ENCODE measurements at regions of chr11 and their contacts with region 1.

Region 1: DNA sequence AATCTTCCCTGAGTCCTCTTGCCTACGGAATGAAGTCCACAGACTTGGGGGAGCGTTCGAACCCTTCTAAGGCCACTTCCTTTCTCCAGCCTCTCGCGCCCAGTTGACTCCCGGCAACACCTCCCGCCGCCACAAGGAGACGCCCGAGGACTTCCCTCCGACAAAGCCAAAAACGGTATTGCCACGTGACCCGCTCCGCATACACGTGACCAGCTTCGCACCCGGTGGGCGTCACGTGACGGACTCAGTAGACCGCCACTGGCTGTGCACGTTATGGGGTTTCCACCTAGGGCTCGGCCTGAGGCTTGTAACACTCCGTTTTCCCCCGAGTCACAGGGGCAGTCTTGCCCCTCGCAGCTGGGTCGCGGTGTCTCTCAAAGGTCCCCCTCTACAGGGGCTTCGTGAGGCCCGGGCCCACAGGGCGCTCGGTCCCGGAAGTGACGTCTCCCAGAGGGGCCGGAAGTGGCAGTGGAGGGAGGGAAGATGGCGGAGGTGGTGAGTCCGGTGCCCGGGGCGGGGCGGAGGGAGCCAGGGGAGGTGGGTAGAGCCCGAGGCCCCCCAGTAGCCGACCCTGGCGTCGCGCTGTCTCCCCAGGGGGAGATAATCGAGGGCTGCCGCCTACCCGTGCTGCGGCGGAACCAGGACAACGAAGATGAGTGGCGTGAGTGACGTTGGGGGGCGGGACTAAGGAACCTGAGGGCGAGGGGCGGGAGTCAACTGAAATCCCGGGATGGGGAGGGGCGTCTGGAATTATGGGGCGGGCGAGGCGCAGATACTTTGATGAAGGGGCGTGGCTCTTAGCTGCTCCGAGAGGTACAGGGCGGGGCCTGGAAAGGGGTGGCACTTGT is at the start of gene KAT5:
- DNase-seq: peak; percentile 100
- H3K4me3 ChIP-seq: peak within 1 kb of the TSS; percentile 58
- H3K27ac ChIP-seq: peak within 1 kb of the TSS; percentile 99
- H3K4me1 ChIP-seq: peaks cover 10% of the 10 kb centered on the region
- H3K27me3 ChIP-seq: no peaks in the 10 kb centered on the region
- CTCF ChIP-seq: peak; percentile 98
- total RNA-seq, gene KAT5: 68.1 and 71.3 TPM in 2 replicates

Region 2: DNA sequence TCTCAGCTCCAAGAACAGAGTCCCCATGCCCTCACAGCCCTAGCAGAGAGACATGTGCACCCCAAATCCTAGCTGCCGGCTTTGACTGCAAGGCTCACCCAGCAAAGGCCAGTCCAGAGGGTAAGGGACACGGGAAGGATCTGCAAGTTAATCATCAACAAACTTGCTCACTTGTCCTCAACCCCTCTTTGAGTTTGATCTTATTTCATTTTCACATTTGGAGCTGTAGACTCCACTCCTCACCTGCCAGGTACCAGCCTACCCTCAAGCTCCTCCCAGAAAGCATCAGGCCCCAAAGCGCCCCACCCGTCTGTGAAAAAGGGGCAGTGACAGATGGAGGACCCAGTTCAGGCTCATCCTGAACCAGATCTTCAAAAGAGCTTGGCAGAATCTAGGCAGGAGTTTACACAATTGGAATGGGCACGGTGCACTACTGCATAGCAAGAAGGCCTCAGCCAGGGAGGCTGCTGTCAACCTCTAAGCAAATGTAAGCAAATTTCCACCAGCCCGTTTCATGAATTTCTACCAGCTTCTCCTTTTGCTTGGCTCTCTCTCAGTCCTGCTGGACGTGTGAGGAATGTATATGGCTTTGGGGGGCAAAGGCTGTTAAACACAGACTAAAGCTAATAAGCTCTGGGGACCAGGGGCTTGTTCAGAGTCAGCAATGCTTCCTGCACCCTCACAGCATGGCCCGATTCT is 839.1 kb before region 1 on chr11:
- CTCF ChIA-PET with region 1: no interaction called
- POLR2A ChIA-PET with region 1: interaction called, 16 read pairs
- intact Hi-C with region 1: no loop called
- DNase-seq: no peak
- H3K4me3 ChIP-seq: no peak overlapping the region
- H3K27ac ChIP-seq: no peak overlapping the region
- H3K4me1 ChIP-seq: peaks cover 20% of the 10 kb centered on the region
- H3K27me3 ChIP-seq: no peaks in the 10 kb centered on the region
- CTCF ChIP-seq: no peak

Region 3: GRCh38 chr11:65471410-65471762 is 240.6 kb before region 1 on chr11:
- CTCF ChIA-PET with region 1: no interaction called
- POLR2A ChIA-PET with region 1: no interaction called
- intact Hi-C with region 1: no loop called
- DNase-seq: peak; percentile 85
- H3K4me3 ChIP-seq: no peak overlapping the region
- H3K27ac ChIP-seq: peak overlapping the region; percentile 49
- H3K4me1 ChIP-seq: peaks cover 14% of the 10 kb centered on the region
- H3K27me3 ChIP-seq: no peaks in the 10 kb centered on the region
- CTCF ChIP-seq: peak; percentile 75

Region 4: GRCh38 chr11:65817835-65818742 is 106.1 kb after region 1 on chr11:
- CTCF ChIA-PET with region 1: interaction called, 12 read pairs
- POLR2A ChIA-PET with region 1: no interaction called
- intact Hi-C with region 1: loop called (anchors 2 kb)
- DNase-seq: peak; percentile 91
- H3K4me3 ChIP-seq: peak overlapping the region; percentile 59
- H3K27ac ChIP-seq: no peak overlapping the region
- H3K4me1 ChIP-seq: no peaks in the 10 kb centered on the region
- H3K27me3 ChIP-seq: no peaks in the 10 kb centered on the region
- CTCF ChIP-seq: peak; percentile 97

Region 5: GRCh38 chr11:65988791-65989592 is 277.0 kb after region 1 on chr11:
- CTCF ChIA-PET with region 1: no interaction called
- POLR2A ChIA-PET with region 1: no interaction called
- intact Hi-C with region 1: loop called (anchors 2 kb)
- DNase-seq: peak; percentile 97
- H3K4me3 ChIP-seq: no peak overlapping the region
- H3K27ac ChIP-seq: no peak overlapping the region
- H3K4me1 ChIP-seq: no peaks in the 10 kb centered on the region
- H3K27me3 ChIP-seq: no peaks in the 10 kb centered on the region
- CTCF ChIP-seq: peak; percentile 100

Region 6: DNA sequence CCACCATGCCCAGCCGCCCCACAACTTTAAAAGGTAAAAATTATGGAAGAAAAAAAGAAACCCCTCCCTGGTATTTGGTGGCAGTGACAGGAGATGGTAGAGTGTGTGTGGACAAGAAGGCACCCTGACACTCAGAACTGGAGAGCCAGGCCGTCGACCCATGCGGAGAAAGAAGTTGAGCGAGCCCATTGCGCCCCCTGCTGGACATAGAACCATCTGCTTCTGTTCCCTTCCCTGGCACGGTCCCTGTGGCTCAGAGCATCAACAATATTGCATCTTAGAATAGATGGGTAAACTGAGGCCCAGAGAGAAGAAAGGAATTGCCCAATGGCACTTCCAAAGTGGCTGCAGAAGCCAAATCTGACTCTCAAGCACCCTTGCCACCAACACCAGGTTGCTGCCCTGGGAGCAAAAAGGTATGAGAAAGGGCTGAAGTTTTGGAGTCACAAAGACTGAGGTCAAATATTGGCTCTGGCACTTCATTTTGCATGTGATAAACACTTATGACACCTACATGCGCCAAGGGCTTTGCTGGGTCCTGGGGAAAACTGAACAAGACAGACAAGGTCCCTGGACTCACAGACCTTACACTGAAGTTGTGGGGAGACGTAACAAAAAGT is 718.1 kb after region 1 on chr11:
- CTCF ChIA-PET with region 1: interaction called, 13 read pairs
- POLR2A ChIA-PET with region 1: no interaction called
- intact Hi-C with region 1: no loop called
- DNase-seq: peak; percentile 84
- H3K4me3 ChIP-seq: no peak overlapping the region
- H3K27ac ChIP-seq: no peak overlapping the region
- H3K4me1 ChIP-seq: no peaks in the 10 kb centered on the region
- H3K27me3 ChIP-seq: no peaks in the 10 kb centered on the region
- CTCF ChIP-seq: peak; percentile 96